Activated CD4-positive, alpha-beta T cell treated with anti-CD3 and anti-CD28 coated beads for 36 hours (primary cell): ENCODE measurements at regions of chr5 and their contacts with region 1.

Region 1: GRCh38 chr5:168747987-168748777 is 169.0 kb upstream of the PANK3 start:
- DNase-seq: peak; percentile 84
- ATAC-seq: peak; percentile 96
- H3K4me3 Mint-ChIP-seq: no peak overlapping the region
- H3K27ac Mint-ChIP-seq: no peak overlapping the region
- H3K4me1 Mint-ChIP-seq: peaks cover 10% of the 10 kb centered on the region
- H3K27me3 Mint-ChIP-seq: peaks cover 7% of the 10 kb centered on the region

Region 2: GRCh38 chr5:168679515-168679920 is 68.7 kb before region 1 on chr5:
- CTCF ChIA-PET with region 1: interaction called, 3 read pairs
- POLR2A ChIA-PET with region 1: no interaction called
- intact Hi-C with region 1: loop called in 1 of 2 experiments (anchors 2 kb)
- DNase-seq: peak; percentile 84
- ATAC-seq: peak; percentile 28
- H3K4me3 Mint-ChIP-seq: no peak overlapping the region
- H3K27ac Mint-ChIP-seq: no peak overlapping the region
- H3K4me1 Mint-ChIP-seq: peaks cover 28% of the 10 kb centered on the region
- H3K27me3 Mint-ChIP-seq: no peaks in the 10 kb centered on the region

Region 3: GRCh38 chr5:168822745-168823281 is 74.6 kb after region 1 on chr5:
- CTCF ChIA-PET with region 1: no interaction called
- POLR2A ChIA-PET with region 1: no interaction called
- intact Hi-C with region 1: loop called in 1 of 2 experiments (anchors 2 kb)
- DNase-seq: peak; percentile 71
- ATAC-seq: peak; percentile 88
- H3K4me3 Mint-ChIP-seq: peak overlapping the region; percentile 58
- H3K27ac Mint-ChIP-seq: peak overlapping the region; percentile 94
- H3K4me1 Mint-ChIP-seq: peaks cover 36% of the 10 kb centered on the region
- H3K27me3 Mint-ChIP-seq: peaks cover 6% of the 10 kb centered on the region

Region 4: DNA sequence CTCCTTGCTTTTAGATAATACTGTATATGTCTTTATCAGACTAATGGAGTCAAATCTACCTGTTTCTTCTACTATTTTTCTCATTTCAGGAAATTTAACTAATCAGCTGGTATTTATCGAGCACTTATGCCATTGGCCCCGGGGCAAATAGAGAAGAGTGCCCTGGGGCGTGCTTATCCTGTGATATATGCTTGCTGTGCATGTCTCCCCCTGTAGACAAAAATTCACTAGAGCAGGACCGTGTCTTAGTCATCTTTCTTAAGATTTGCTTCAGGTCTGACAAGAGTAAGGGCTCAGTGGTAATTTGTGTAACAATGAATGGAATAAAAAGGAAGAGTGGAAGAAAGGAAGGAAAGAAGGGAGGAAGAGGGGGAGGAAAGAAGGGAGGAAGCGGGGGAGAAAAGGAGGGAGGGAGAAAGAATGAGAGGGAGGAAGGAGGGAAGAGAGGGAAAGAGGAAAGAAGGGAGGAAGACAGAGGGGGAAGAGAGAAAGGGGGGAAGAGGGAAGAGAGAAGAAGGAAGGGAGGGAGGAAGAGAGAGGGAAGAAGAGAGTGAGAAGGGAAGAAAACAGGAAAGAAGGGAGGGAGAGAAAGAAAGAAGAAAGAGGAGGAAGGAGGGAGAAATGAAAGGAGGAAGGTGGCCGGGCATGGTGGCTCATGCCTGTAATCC is 126.7 kb after region 1 on chr5:
- CTCF ChIA-PET with region 1: interaction called, 3 read pairs
- POLR2A ChIA-PET with region 1: no interaction called
- intact Hi-C with region 1: loop called (anchors 1 to 10 kb)
- DNase-seq: peak; percentile 26
- ATAC-seq: peak; percentile 88
- H3K4me3 Mint-ChIP-seq: no peak overlapping the region
- H3K27ac Mint-ChIP-seq: no peak overlapping the region
- H3K4me1 Mint-ChIP-seq: peaks cover 5% of the 10 kb centered on the region
- H3K27me3 Mint-ChIP-seq: peaks cover 18% of the 10 kb centered on the region

Region 5: GRCh38 chr5:168947212-168947868 is 199.2 kb after region 1 on chr5:
- CTCF ChIA-PET with region 1: no interaction called
- POLR2A ChIA-PET with region 1: no interaction called
- intact Hi-C with region 1: loop called in 1 of 2 experiments (anchors 1 kb)
- DNase-seq: peak; percentile 73
- ATAC-seq: peak; percentile 58
- H3K4me3 Mint-ChIP-seq: no peak overlapping the region
- H3K27ac Mint-ChIP-seq: no peak overlapping the region
- H3K4me1 Mint-ChIP-seq: peaks cover 8% of the 10 kb centered on the region
- H3K27me3 Mint-ChIP-seq: no peaks in the 10 kb centered on the region